ENCODE measurements at regions of chr2 and their contacts with region 1.

Region 1: DNA sequence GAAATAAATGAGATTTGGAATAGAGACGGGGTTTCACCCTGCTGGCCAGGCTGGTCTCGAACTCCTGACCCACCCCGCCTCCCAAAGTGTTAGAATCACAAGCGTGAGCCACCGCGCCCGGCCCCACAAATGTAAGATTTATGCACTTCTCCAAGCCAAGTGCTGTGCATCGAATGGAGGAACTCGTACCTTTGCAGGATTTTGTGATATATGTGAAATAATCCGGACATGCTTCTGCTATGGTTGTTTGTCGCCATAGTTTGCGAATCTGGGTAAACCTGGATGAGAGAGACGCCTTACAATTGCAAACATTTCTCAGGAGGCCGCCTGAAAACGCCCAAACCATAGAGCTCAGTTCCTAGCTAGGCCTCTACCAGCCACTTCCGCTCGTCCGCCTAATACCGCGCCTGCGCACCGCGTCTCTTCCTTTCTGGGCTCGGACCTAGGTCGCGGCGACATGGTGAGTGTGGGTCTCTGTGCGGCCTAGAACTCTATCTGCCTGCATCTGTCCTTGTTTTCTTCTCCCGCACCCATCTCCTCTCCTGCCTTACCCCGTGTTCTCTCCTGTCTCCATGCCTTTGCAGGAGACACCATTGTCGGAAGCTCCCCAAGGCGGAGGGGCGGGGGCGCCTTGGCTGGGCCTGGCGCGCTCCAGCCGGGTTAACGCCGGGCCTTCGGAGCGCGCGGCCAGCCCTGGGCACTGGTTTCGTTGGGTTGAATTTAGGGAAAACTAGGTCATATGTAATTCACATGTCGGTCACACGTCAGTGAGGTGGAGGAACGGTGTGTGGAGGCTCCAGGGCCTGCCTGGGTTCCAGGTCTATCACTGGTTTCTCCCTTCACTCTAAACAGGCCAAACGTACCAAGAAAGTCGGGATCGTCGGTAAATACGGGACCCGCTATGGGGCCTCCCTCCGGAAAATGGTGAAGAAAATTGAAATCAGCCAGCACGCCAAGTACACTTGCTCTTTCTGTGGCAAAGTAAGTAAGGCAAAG is at the start of gene RPL37A:
- DNase-seq: peak; percentile 90 to 99 (median 93)

Region 2: DNA sequence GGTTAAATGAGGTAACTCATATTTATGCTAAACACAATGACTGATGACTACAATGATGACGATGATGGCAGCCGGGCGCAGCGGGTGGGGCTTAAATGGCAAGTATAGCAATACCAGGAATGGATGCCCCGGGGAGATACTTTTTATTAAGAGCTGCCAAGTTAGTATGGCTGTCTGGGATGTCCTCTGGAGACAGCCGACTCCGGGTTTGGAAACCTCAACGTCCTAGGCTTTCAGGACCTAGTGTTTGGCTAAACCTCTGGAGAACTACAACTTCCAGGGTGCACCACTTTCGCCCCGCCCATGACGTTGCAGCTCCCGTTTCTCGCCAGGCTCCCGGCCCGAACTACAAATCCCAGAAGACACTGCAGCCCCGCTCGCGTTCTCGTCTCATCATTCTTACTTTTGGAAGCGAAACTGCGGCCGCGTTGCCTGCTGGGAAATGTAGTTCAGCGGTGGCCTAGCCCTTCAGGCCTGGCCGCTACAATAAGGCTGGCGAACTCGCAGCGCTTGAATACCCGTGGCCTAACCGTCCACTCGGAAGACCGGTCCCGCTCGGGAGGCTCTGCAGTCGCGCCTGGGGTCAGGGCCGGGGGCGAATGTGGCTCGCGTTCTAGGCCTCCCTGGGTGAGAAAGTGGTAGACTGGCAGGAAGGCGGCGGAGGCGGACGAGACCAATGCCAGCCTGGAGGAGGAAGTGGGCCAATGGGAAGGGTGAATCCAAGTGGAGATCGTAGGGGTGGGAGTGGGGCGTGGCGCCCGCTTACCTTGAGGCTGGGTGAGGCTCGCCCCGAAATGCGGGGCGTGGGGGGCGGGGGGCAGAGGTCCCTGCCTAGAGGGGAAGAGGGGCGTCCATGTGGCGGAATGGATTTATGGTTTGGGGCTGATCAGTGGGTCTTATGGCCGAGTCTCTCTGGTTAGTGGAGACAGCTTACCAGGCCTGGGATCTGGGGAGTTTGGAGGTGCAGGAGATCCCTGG is 86.4 kb before region 1 on chr2 and contains the start of gene SMARCAL1:
- intact Hi-C with region 1: loop called (anchors 1 kb)
- DNase-seq: peak; percentile 99 to 100 (median 100)

Region 3: DNA sequence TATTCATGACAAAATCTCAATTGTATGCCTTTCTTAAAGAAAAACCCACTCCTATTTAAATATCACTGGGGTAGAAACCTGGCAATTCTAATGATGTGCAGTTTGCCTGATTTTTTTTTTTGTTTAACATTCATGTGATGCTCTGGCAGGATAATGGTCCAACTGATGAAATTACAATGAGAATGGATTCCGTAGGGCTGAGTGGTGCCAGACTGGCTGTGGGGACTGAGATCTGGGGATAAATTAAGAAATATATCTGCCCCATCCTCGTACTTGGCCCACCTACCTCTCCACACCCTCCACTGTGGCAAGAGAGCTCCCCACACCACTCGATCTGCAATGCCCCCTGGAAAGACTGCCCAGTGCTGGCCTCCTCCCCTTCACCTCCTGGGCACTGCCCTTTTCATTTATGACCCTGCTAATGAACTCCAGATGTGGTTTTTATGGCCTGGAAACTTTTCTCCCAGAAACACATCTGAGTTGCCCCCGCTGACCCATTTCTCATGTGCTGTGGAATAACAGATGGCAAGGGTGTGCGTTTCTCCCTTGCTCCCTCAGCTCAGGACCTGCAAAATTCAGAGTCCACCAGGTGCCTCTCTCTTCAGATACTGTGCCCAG is 33.0 kb before region 1 on chr2:
- intact Hi-C with region 1: no loop called
- DNase-seq: no peak

Region 4: GRCh38 chr2:216583147-216583546 is 84.4 kb after region 1 on chr2:
- intact Hi-C with region 1: no loop called
- DNase-seq: no peak

Region 5: GRCh38 chr2:216727346-216728122 is 228.8 kb after region 1 on chr2:
- intact Hi-C with region 1: no loop called
- DNase-seq: no peak